RWPE1 (cell line): ENCODE measurements at regions of chr10 and their contacts with region 1.

Region 1: DNA sequence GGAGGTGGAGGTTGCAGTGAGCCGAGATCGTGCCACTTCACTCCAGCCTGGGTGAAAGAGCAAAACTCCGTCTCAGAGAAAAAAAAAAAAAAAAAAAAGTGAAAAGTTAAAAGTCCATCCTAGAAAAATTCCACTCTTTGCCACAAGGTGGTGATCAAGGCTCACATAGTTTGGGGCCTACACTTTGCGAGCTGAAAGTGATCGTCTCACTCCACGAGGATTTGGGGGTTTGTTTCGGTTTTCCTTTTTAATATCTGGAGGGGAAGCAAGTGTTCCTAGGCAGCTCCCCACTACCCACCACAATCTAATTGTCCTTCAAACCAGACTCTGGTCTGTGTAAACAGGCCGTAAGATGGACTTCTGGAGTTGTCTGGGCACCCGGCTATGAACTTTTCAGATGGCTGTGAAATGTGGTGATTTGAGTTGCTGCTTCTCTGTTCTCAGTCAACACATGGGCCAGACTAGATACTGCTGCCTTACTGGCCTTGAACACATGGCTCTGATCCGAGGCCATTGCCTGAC is 27.1 kb downstream of the PRLHR start:
- DNase-seq: peak; percentile 69
- H3K27ac ChIP-seq: no peak overlapping the region
- CTCF ChIP-seq: peak; percentile 77

Region 2: GRCh38 chr10:118504044-118504874 is 64.1 kb before region 1 on chr10:
- CTCF ChIA-PET with region 1: no interaction called
- POLR2A ChIA-PET with region 1: no interaction called
- DNase-seq: peak; percentile 93
- H3K27ac ChIP-seq: peak overlapping the region; percentile 100
- CTCF ChIP-seq: no peak

Region 3: GRCh38 chr10:118581361-118581886 is 13.0 kb after region 1 on chr10:
- CTCF ChIA-PET with region 1: interaction called, 35 read pairs
- POLR2A ChIA-PET with region 1: no interaction called
- DNase-seq: no peak
- H3K27ac ChIP-seq: no peak overlapping the region
- CTCF ChIP-seq: no peak

Region 4: GRCh38 chr10:118720685-118721538 is 152.5 kb after region 1 on chr10:
- CTCF ChIA-PET with region 1: interaction called, 16 read pairs
- POLR2A ChIA-PET with region 1: no interaction called
- DNase-seq: peak; percentile 49
- H3K27ac ChIP-seq: no peak overlapping the region
- CTCF ChIP-seq: peak; percentile 89